Left lung (tissue), 14 donors: ENCODE measurements at regions of chr19 and their contacts with region 1.

Region 1: DNA sequence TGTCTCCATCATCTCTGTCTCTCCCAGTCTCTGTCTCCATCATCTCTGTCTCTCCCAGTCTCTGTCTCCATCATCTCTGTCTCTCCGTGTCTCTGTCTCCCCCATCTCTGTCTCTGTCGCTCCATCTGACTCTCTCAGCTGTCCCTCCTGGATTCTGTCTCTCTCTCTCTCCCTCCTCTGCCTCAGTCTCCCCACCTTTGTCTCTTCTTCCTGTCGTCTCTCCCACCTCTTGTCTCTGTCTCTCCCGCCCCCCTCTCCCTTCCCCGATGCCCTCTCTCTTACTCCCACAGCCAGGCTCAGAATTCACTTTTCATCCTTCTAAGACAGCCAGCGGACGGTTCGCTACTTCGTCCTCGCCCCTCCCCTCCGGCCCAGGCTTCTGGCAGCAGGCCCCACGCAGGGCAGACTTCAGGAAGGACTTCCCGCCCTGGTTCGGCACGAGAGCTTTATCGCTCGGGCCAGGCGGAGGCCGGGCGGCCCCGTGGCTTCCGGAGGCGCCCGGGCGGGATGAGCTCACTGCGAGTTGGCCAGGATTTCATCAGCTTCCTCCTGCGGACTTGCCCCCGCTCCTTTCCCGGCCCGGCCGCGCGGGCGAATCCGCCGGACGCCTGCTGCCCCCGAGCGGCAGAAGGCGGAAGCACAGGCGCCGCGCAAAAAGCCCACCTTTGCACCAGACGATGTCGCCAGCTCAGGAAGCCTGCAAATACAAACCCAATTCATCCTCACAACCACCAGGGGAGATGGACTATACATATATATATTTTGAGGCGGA is 12.4 kb upstream of the CCDC9 start:
- DNase-seq: peak; percentile 87 to 99 (median 94)
- ATAC-seq: peak; percentile 90
- H3K4me3 ChIP-seq: peak overlapping the region; percentile 10 to 36
- H3K27ac ChIP-seq: peak overlapping the region; percentile 10 to 72
- H3K4me1 ChIP-seq: peaks cover 5 to 63% of the 10 kb centered on the region in 2 donors
- H3K27me3 ChIP-seq: peaks cover 13 to 44% of the 10 kb centered on the region in 2 donors
- CTCF ChIP-seq: peak; percentile 98 to 99

Region 2: GRCh38 chr19:47145639-47146486 is 98.1 kb before region 1 on chr19:
- intact Hi-C with region 1: loop called in 1 of 2 experiments (anchors 5 kb)
- DNase-seq: no peak
- ATAC-seq: no peak
- H3K4me3 ChIP-seq: no peak overlapping the region
- H3K27ac ChIP-seq: no peak overlapping the region
- H3K4me1 ChIP-seq: peaks cover 0 to 15% of the 10 kb centered on the region in 2 donors
- H3K27me3 ChIP-seq: no peaks in the 10 kb centered on the region
- CTCF ChIP-seq: no peak

Region 3: DNA sequence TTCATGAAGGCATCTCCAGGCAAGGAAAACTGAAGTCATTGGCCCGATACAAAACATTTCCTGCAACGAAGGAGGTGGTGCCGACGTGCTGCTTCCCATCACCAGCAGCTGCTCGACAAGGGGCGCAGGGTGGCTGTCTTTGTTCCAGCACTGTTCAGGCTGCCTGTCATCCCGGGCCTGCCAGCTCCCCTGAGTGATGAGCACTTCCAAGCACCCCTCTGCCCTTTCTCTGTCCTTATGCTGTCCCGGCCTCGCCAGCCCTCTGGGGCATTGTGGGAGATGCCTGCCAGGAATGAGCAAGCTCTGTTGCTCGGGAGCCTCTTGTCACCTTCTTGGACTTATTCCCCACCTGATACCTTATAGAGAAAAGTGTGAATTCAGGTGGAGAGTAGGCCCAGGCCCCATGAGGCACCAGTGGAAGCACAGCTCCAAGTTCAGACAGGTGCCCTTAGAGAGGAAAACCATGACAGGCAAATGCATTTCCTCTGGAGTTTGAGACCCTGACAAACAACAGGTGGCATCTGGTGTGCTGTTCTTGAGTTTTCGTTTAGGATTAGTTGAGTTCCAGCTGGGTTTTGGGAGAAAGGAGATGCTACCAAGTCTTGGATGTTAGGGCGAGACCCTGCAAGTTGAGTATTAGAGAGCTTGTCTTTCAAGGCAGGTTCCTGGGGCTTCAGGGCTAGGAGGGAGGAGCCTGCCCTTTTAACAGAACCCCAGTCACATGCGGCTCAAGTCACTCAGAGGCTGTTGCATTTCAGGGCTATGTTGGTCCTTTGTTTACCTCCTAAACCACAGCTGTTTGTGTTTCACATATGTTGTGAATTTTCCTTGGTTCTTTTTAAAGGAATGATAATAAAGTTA is 34.4 kb before region 1 on chr19:
- intact Hi-C with region 1: loop called in 1 of 2 experiments (anchors 5 kb)
- DNase-seq: no peak
- ATAC-seq: no peak
- H3K4me3 ChIP-seq: no peak overlapping the region
- H3K27ac ChIP-seq: no peak overlapping the region
- H3K4me1 ChIP-seq: peaks cover 6 to 14% of the 10 kb centered on the region in 2 donors
- H3K27me3 ChIP-seq: no peaks in the 10 kb centered on the region
- CTCF ChIP-seq: no peak